HepG2 (cell line): ENCODE measurements at regions of chr6 and their contacts with region 1.

Region 1: DNA sequence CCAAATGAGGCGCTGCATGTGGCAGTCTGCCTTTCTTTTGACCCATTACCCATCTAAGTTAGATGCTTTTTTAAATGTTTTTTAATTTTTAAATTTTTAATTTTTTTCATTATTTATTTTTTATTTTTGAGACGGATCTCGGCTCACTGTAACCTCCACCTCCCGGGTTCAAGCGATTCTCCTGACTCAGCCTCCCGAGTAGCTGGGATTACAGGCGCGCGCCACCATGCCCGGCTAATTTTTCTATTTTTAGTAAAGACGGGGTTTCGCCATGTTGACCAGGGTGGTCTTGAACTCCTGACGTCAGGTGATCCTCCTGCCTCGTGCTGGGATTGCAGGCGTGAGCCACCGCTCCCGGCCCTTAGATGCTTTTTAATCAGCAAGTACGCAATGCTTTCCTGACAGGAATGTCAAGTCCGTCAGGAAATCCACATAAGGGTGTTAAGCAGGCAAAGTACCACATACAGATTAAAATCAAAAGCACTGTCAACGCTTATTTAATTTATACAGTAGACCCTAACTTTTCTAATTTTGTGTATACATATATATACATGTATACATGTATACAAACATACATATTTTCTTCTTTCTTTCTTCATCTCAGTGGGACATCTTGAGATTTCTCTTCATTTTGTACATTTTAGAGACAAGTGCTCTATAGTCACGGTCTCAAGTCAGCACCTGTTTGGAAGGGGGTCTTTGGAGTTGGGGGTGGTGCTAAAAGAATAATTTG is 995 bp upstream of the GSTA4 start:
- DNase-seq: peak; percentile 76
- ATAC-seq: no peak
- H3K4me3 ChIP-seq: peak overlapping the region; percentile 34 to 68 (median 57)
- H3K27ac ChIP-seq: no peak overlapping the region
- H3K4me1 ChIP-seq: peaks cover 24% of the 10 kb centered on the region
- H3K27me3 ChIP-seq: no peaks in the 10 kb centered on the region
- CTCF ChIP-seq: no peak
- EP300 ChIP-seq: no peak
- POLR2A ChIP-seq: no peak
- RAD21 ChIP-seq: no peak

Region 2: GRCh38 chr6:52087498-52087999 is 908.5 kb before region 1 on chr6 and contains the start of gene PKHD1:
- CTCF ChIA-PET with region 1: no interaction called
- POLR2A ChIA-PET with region 1: no interaction called
- in situ Hi-C with region 1: no loop called
- intact Hi-C with region 1: no loop called
- DNase-seq: peak; percentile 55
- ATAC-seq: peak; percentile 96
- H3K4me3 ChIP-seq: peak within 1 kb of the TSS in 1 of 3 experiments; percentile 20; a peak in 1 of 6 replicates
- H3K27ac ChIP-seq: no peak within 1 kb of the TSS
- H3K4me1 ChIP-seq: peaks cover 24% of the 10 kb centered on the region
- H3K27me3 ChIP-seq: no peaks in the 10 kb centered on the region
- CTCF ChIP-seq: peak; percentile 74
- EP300 ChIP-seq: no peak
- POLR2A ChIP-seq: no peak
- RAD21 ChIP-seq: no peak
- total RNA-seq, gene PKHD1: 0.10 and 0.13 TPM in 2 replicates

Region 3: DNA sequence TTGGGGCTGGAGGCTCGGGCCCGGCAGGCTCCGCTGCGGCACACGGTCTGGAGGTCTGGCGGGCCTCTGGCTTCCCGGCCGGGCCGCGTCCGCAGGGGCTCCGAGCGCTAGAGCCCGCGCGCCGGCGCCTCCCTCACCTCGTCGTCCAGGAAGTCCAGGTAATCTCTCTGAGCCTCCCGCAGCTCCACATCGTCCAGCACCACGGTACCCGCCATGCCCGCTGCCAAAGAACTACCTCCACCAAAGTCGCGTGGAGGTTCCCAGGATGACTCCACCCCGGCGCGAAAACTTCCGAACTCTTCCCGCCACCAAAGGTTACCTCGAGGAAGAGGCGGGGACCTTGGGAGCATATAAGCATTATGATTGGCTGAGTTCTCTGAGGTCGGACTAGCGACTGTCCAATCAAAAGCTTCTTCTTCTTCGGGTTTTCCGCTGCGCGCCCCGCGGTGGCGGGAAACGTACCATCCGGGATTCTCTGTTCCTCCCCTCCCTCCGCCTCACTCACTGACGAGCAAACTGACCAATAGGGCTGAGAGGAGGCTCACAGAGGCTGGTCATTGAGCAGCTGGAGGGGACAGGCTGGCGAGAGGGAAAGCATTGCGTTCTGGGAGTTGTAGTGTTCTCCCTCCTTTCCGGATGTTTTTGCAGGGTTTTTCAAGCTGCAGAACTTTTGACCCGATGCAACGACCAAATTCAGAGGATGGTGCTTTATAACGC is 711.5 kb before region 1 on chr6 and contains the start of gene MCM3:
- CTCF ChIA-PET with region 1: no interaction called
- POLR2A ChIA-PET with region 1: no interaction called
- in situ Hi-C with region 1: no loop called
- intact Hi-C with region 1: loop called (anchors 10 kb)
- DNase-seq: peak; percentile 100
- ATAC-seq: peak; percentile 99
- H3K4me3 ChIP-seq: peak within 1 kb of the TSS; percentile 80 to 94 (median 90)
- H3K27ac ChIP-seq: peak within 1 kb of the TSS; percentile 86
- H3K4me1 ChIP-seq: peaks cover 67% of the 10 kb centered on the region
- H3K27me3 ChIP-seq: no peaks in the 10 kb centered on the region; a peak in 1 of 5 replicates
- CTCF ChIP-seq: peak; percentile 14; the same call in 1 of the 2 replicates
- EP300 ChIP-seq: peak in 1 of 2 experiments; percentile 15; a peak in 1 of 4 replicates
- POLR2A ChIP-seq: peak; percentile 71 to 94
- RAD21 ChIP-seq: peak; percentile 69
- total RNA-seq, gene MCM3: 288 and 336 TPM in 2 replicates

Region 4: GRCh38 chr6:52670502-52671409 is 325.3 kb before region 1 on chr6 and contains the start of gene TMEM14A:
- CTCF ChIA-PET with region 1: no interaction called
- POLR2A ChIA-PET with region 1: no interaction called
- in situ Hi-C with region 1: no loop called
- intact Hi-C with region 1: loop called (anchors 2 kb)
- DNase-seq: peak; percentile 95
- ATAC-seq: peak; percentile 98
- H3K4me3 ChIP-seq: peak within 1 kb of the TSS; percentile 60 to 80 (median 69)
- H3K27ac ChIP-seq: peak within 1 kb of the TSS; percentile 60
- H3K4me1 ChIP-seq: peaks cover 55% of the 10 kb centered on the region
- H3K27me3 ChIP-seq: no peaks in the 10 kb centered on the region; a peak in 1 of 5 replicates
- CTCF ChIP-seq: peak; percentile 50
- EP300 ChIP-seq: peak in 1 of 2 experiments; percentile 59; a peak in 2 of 4 replicates
- POLR2A ChIP-seq: peak; percentile 93 to 96
- RAD21 ChIP-seq: peak; percentile 74
- total RNA-seq, gene TMEM14A: 73.7 and 78.0 TPM in 2 replicates

Region 5: DNA sequence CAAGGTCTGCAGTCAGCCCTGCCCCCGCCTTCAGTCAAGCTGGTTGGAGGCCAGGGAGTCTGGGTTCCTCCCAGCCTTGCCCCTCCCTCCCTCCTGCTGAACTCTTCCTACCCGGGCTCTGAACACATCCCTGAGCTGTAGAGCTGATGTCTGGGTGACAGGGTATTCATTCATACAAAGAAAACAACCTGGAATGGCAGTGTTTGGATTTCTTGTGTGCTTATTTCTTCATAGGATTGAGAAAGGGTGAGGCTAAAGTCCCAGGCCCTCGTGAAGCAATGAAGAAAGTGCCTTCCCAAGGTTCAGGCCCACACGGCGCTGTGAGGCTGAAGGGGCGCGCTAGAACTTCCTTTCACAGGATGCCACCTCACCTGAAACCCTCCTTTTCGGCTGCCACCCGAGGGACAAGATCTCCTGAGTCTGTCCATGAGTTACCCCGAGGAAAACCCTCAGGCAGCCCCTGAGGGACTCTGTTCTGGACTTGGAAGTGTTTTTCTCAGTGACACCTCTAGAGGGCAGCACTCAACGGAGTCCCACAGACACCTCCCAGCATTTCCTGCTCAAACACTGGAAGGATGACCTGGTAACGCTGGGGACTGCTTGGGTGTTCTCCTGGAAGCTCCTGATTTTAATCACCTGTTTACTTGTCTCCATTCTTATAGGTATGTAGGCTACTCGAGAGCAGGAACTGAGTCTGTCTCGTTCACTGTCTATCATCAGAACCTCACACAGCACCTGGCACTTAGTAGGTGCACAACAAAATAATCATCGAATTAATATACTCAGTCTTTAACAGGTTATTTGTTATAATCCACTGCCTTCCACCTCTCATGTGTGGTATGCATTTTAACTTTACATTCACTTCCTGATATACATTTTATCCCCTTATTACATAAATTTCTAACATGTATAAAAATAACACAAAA is 180.6 kb before region 1 on chr6:
- CTCF ChIA-PET with region 1: no interaction called
- POLR2A ChIA-PET with region 1: interaction called, 7 read pairs
- in situ Hi-C with region 1: no loop called
- intact Hi-C with region 1: loop called (anchors 1 kb)
- DNase-seq: peak; percentile 91
- ATAC-seq: peak; percentile 92
- H3K4me3 ChIP-seq: peak overlapping the region; percentile 34 to 69 (median 41); a peak in 4 of 6 replicates
- H3K27ac ChIP-seq: peak overlapping the region; percentile 89
- H3K4me1 ChIP-seq: peaks cover 34% of the 10 kb centered on the region
- H3K27me3 ChIP-seq: no peaks in the 10 kb centered on the region
- CTCF ChIP-seq: peak; percentile 88
- EP300 ChIP-seq: peak in 1 of 2 experiments; percentile 90; a peak in 3 of 4 replicates
- POLR2A ChIP-seq: peak in 1 of 2 experiments; percentile 69; a peak in 2 of 4 replicates
- RAD21 ChIP-seq: peak; percentile 78

Region 6: GRCh38 chr6:52904562-52905279 is 91.4 kb before region 1 on chr6:
- CTCF ChIA-PET with region 1: no interaction called
- POLR2A ChIA-PET with region 1: no interaction called
- in situ Hi-C with region 1: no loop called
- intact Hi-C with region 1: loop called (anchors 1 kb)
- DNase-seq: peak; percentile 34
- ATAC-seq: peak; percentile 97
- H3K4me3 ChIP-seq: no peak overlapping the region
- H3K27ac ChIP-seq: no peak overlapping the region
- H3K4me1 ChIP-seq: peaks cover 6% of the 10 kb centered on the region; the same call in 1 of the 2 replicates
- H3K27me3 ChIP-seq: peaks cover 0 to 2% of the 10 kb centered on the region in 2 experiments; a peak in 2 of 5 replicates
- CTCF ChIP-seq: peak; percentile 63
- EP300 ChIP-seq: no peak
- POLR2A ChIP-seq: no peak
- RAD21 ChIP-seq: peak; percentile 60

Region 7: DNA sequence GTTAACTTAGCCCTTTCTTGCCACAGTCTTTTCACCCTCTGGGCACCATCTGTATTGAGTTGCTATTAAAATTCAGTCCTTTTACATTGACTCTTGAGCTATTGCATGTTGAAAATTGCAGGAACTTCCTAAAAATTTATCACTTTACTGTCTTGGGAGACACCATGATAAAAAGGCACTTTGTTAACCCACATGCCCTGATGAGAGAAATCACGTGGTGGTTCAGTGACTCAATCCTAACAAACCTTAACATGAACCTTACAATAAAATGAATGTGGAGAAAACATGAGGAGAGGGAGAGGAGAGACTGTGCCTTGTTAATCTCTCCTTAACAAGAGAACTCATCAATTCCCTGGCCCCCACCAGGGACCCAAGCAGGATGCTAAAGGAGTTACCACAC is 31.8 kb before region 1 on chr6:
- CTCF ChIA-PET with region 1: no interaction called
- POLR2A ChIA-PET with region 1: no interaction called
- in situ Hi-C with region 1: no loop called
- intact Hi-C with region 1: no loop called
- DNase-seq: no peak
- ATAC-seq: no peak
- H3K4me3 ChIP-seq: no peak overlapping the region
- H3K27ac ChIP-seq: no peak overlapping the region
- H3K4me1 ChIP-seq: peaks cover 21% of the 10 kb centered on the region
- H3K27me3 ChIP-seq: peaks cover 0 to 16% of the 10 kb centered on the region in 2 experiments; a peak in 2 of 5 replicates
- CTCF ChIP-seq: no peak
- EP300 ChIP-seq: no peak
- POLR2A ChIP-seq: no peak
- RAD21 ChIP-seq: no peak

Region 8: DNA sequence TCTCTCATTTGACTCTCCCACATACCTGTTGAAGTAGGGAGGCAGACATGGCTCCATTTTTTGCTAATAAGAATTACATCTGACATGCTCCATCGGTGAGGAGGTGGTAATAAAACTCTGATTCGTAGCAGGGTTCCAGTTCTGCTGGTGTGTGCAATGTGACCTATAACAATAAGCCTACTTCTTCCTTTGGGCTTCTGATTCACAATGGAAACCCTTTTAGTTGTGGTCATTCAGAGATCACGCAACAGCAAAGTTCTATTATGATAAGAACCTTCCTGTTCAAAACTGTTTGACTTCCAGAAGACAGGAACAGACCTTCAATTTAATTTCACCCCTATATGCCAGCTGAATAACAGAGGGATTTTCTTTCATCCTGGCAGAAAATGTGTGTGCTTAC is 30.4 kb after region 1 on chr6:
- CTCF ChIA-PET with region 1: no interaction called
- POLR2A ChIA-PET with region 1: no interaction called
- in situ Hi-C with region 1: no loop called
- intact Hi-C with region 1: loop called (anchors 2 kb)
- DNase-seq: no peak
- ATAC-seq: no peak
- H3K4me3 ChIP-seq: no peak overlapping the region
- H3K27ac ChIP-seq: no peak overlapping the region
- H3K4me1 ChIP-seq: no peaks in the 10 kb centered on the region
- H3K27me3 ChIP-seq: no peaks in the 10 kb centered on the region
- CTCF ChIP-seq: no peak
- EP300 ChIP-seq: no peak
- POLR2A ChIP-seq: no peak
- RAD21 ChIP-seq: no peak

Region 9: GRCh38 chr6:53484476-53485280 is 488.6 kb after region 1 on chr6:
- CTCF ChIA-PET with region 1: interaction called, 9 read pairs
- POLR2A ChIA-PET with region 1: no interaction called
- in situ Hi-C with region 1: no loop called
- intact Hi-C with region 1: loop called (anchors 10 kb)
- DNase-seq: peak; percentile 67
- ATAC-seq: peak; percentile 76
- H3K4me3 ChIP-seq: no peak overlapping the region
- H3K27ac ChIP-seq: no peak overlapping the region
- H3K4me1 ChIP-seq: peaks cover 17% of the 10 kb centered on the region
- H3K27me3 ChIP-seq: no peaks in the 10 kb centered on the region; a peak in 1 of 5 replicates
- CTCF ChIP-seq: peak; percentile 87
- EP300 ChIP-seq: no peak
- POLR2A ChIP-seq: no peak
- RAD21 ChIP-seq: peak; percentile 86

Region 10: DNA sequence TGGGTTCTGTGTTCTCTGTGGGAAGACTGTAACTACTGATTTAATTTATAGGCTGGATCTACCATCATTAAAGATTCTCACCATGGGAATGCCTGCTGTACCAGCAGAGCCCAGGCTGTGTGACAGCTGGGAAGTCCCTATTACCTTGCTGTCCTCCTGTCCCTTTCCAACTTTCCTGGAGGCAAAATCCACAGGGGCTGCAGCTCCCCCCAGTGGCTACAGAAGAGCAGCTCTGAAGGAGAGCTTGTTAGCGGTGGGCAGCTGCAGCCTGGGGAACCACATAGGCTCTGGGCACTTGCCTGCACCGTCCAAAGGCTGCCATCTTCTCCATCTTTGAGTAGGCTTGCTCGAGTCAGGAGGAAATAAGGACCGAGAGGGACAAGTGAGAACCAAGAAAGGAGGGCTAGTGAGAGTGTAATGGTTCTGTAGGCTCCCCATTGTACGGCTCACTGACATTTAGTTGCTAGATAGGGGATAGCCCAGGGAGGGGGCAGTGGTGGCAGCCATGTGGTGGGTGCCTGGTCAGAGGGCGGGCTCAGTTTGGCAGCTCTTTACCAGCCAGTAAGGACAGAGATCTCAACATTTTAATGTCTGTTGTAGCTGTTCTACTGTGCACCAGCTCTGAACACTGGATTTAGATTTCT is 960.1 kb after region 1 on chr6:
- CTCF ChIA-PET with region 1: no interaction called
- POLR2A ChIA-PET with region 1: no interaction called
- in situ Hi-C with region 1: no loop called
- intact Hi-C with region 1: no loop called
- DNase-seq: peak; percentile 79
- ATAC-seq: peak; percentile 100
- H3K4me3 ChIP-seq: no peak overlapping the region
- H3K27ac ChIP-seq: no peak overlapping the region
- H3K4me1 ChIP-seq: no peaks in the 10 kb centered on the region
- H3K27me3 ChIP-seq: no peaks in the 10 kb centered on the region; a peak in 1 of 5 replicates
- CTCF ChIP-seq: peak; percentile 98
- EP300 ChIP-seq: no peak
- POLR2A ChIP-seq: no peak
- RAD21 ChIP-seq: peak; percentile 92